Caco-2 (cell line): ENCODE measurements at regions of chr1 and their contacts with region 1.

Region 1: GRCh38 chr1:94316836-94317789 is 79.7 kb upstream of the ARHGAP29 start:
- DNase-seq: peak; percentile 56 to 68
- H3K4me3 ChIP-seq: no peak overlapping the region
- H3K4me3 Mint-ChIP-seq: peak overlapping the region; percentile 70
- H3K27ac Mint-ChIP-seq: peak overlapping the region; percentile 90
- H3K4me1 ChIP-seq: peaks cover 79% of the 10 kb centered on the region
- H3K4me1 Mint-ChIP-seq: peaks cover 37% of the 10 kb centered on the region
- H3K27me3 ChIP-seq: no peaks in the 10 kb centered on the region
- H3K27me3 Mint-ChIP-seq: no peaks in the 10 kb centered on the region
- CTCF ChIP-seq: no peak

Region 2: GRCh38 chr1:94068999-94069918 is 247.9 kb before region 1 on chr1:
- CTCF ChIA-PET with region 1: no interaction called
- POLR2A ChIA-PET with region 1: no interaction called
- intact Hi-C with region 1: loop called (anchors 2 kb)
- DNase-seq: peak; percentile 55 to 69
- H3K4me3 ChIP-seq: no peak overlapping the region
- H3K4me3 Mint-ChIP-seq: peak overlapping the region; percentile 38
- H3K27ac Mint-ChIP-seq: peak overlapping the region; percentile 84
- H3K4me1 ChIP-seq: peaks cover 31% of the 10 kb centered on the region
- H3K4me1 Mint-ChIP-seq: peaks cover 38% of the 10 kb centered on the region
- H3K27me3 ChIP-seq: no peaks in the 10 kb centered on the region
- H3K27me3 Mint-ChIP-seq: no peaks in the 10 kb centered on the region
- CTCF ChIP-seq: no peak

Region 3: GRCh38 chr1:94247138-94248094 is 69.7 kb before region 1 on chr1:
- CTCF ChIA-PET with region 1: no interaction called
- POLR2A ChIA-PET with region 1: no interaction called
- intact Hi-C with region 1: loop called (anchors 2 kb)
- DNase-seq: peak; percentile 82 to 92
- H3K4me3 ChIP-seq: peak overlapping the region; percentile 58
- H3K4me3 Mint-ChIP-seq: peak overlapping the region; percentile 98
- H3K27ac Mint-ChIP-seq: peak overlapping the region; percentile 85
- H3K4me1 ChIP-seq: peaks cover 27% of the 10 kb centered on the region; the same call in 1 of the 2 replicates
- H3K4me1 Mint-ChIP-seq: peaks cover 26% of the 10 kb centered on the region
- H3K27me3 ChIP-seq: no peaks in the 10 kb centered on the region
- H3K27me3 Mint-ChIP-seq: no peaks in the 10 kb centered on the region
- CTCF ChIP-seq: no peak

Region 4: GRCh38 chr1:94468708-94469107 is 151.6 kb after region 1 on chr1:
- CTCF ChIA-PET with region 1: no interaction called
- POLR2A ChIA-PET with region 1: no interaction called
- intact Hi-C with region 1: no loop called
- DNase-seq: no peak
- H3K4me3 ChIP-seq: no peak overlapping the region
- H3K4me3 Mint-ChIP-seq: no peak overlapping the region
- H3K27ac Mint-ChIP-seq: no peak overlapping the region
- H3K4me1 ChIP-seq: peaks cover 4% of the 10 kb centered on the region; the same call in 1 of the 2 replicates
- H3K4me1 Mint-ChIP-seq: peaks cover 7% of the 10 kb centered on the region
- H3K27me3 ChIP-seq: no peaks in the 10 kb centered on the region
- H3K27me3 Mint-ChIP-seq: no peaks in the 10 kb centered on the region
- CTCF ChIP-seq: no peak